ENCODE measurements at regions of chr7 and their contacts with region 1.

Region 1: GRCh38 chr7:106346678-106347217 is 62.0 kb upstream of the NAMPT start:
- DNase-seq: peak; percentile 59
- CTCF ChIP-seq: no peak

Region 2: DNA sequence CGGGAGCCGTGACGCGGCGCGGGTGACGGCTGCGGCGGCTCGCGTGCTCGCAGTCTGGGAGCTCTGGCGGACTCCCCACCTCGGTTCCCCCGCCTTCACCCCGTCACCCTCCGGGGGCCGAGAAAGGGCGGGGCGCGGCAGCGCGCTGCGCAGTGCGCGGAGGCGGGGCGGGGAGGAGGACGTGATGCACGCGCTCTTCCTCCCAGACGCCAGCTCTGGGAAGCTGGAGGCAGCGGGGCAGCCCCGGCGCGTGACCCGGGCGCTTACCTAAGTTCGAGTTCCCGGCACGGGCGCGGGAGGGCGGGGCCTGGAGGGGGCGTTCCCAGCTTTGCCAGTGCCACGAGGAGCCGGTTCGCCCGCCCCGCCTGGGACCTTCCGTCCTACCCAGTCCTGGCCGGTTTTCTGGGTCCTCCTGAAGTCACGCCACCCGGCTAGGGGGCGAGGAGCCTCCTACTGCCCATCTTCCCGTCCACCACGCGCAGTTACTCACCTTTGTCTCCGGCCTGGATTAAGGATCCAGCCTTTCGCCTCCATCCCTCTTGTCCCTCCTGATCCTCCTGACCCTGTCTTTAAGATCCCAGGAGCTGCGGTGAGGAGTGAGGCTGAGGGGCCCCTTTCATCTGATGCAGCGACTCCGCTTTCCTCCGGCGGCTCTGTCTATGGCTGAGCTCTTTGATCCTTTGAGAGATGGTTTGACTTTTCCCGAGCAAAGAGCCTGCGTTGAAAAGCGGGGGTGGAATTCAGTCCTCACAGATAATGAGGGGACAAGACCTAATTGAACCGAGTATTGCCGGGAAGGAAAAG is 61.5 kb before region 1 on chr7:
- CTCF ChIA-PET with region 1: interaction called, 3 read pairs
- POLR2A ChIA-PET with region 1: interaction called, 11 read pairs
- DNase-seq: peak; percentile 94
- CTCF ChIP-seq: no peak

Region 3: DNA sequence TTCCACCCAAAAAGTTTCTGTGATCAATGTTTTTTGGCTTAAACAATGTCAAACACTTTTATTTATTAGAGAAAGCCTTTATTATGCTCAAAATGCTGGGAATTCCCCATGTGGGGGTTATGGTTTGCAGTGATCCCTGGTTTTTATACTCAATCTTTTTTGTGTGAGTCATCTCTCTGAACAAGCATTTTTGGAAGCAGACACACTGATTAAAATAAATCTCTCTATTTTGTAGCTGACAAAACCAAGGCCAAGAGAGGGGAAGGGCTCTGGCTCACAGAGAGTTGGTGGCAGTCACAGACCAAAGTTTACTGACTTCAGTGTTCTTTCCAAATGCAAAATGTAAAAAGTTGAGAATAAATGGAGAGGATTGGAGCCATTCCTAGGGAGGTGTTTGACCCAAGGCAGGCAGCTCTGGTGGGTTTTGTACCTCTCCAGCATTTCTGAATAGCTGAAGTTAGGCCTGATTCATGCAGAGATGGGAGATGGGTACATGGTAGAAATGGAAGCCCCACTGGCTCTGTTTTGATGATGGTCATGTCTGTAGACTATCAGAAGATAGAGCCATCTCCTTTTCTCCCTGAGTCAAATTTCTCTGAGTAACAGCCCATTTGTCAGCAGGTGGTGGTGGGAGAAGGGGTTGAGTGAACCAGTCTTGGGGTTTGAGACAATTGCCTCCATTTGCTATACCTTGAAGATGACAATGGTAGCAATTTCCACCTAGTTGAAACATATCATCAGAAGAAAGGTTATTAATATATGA is 16.6 kb before region 1 on chr7:
- CTCF ChIA-PET with region 1: interaction called, 10 read pairs
- POLR2A ChIA-PET with region 1: no interaction called
- DNase-seq: no peak
- CTCF ChIP-seq: no peak

Region 4: DNA sequence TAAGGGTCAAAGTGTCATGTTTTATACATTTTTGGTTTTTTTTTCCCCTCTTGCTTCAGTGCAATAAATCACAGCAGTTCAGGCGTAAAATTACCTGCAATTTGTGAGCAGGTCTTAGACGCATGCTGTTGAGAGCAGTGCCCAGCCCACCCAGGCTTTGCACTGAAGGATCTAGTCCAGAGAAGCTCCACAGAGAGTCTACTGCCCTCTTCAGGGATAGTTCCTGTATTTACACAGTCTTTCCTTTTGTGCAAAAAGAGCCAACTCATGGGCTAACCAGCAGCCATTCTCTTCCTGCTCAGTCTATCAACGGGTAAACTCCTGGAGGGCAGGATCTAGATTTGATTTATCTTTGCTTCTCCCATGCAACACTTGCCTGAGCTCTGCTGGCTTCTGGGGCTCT is 20.3 kb after region 1 on chr7:
- CTCF ChIA-PET with region 1: interaction called, 13 read pairs
- POLR2A ChIA-PET with region 1: no interaction called
- DNase-seq: peak; percentile 29
- CTCF ChIP-seq: peak; percentile 15

Region 5: GRCh38 chr7:106425017-106425719 is 78.4 kb after region 1 on chr7:
- CTCF ChIA-PET with region 1: no interaction called
- POLR2A ChIA-PET with region 1: no interaction called
- DNase-seq: peak; percentile 81
- CTCF ChIP-seq: no peak

Measured in GM10248 (cell line).